Vagina (tissue), 2 donors: ENCODE measurements at regions of chr7 and their contacts with region 1.

Region 1: GRCh38 chr7:156397249-156397648 is 243.3 kb upstream of the RNF32 start:
- DNase-seq: no peak
- H3K4me3 ChIP-seq: no peak overlapping the region
- H3K27ac ChIP-seq: no peak overlapping the region
- H3K4me1 ChIP-seq: no peaks in the 10 kb centered on the region
- H3K27me3 ChIP-seq: no peaks in the 10 kb centered on the region
- CTCF ChIP-seq: no peak
- POLR2A ChIP-seq: no peak

Region 2: GRCh38 chr7:154871483-154871882 is 1525.8 kb before region 1 on chr7:
- intact Hi-C with region 1: no loop called
- DNase-seq: no peak
- H3K4me3 ChIP-seq: no peak overlapping the region
- H3K27ac ChIP-seq: no peak overlapping the region
- H3K4me1 ChIP-seq: no peaks in the 10 kb centered on the region
- H3K27me3 ChIP-seq: no peaks in the 10 kb centered on the region
- CTCF ChIP-seq: no peak
- POLR2A ChIP-seq: no peak

Region 3: GRCh38 chr7:157250605-157251228 is 853.5 kb after region 1 on chr7:
- intact Hi-C with region 1: loop called (anchors 5 kb)
- DNase-seq: peak in 1 of 2 donors; percentile 74
- H3K4me3 ChIP-seq: no peak overlapping the region
- H3K27ac ChIP-seq: no peak overlapping the region
- H3K4me1 ChIP-seq: no peaks in the 10 kb centered on the region
- H3K27me3 ChIP-seq: no peaks in the 10 kb centered on the region
- CTCF ChIP-seq: peak; percentile 15 to 64 (median 34)
- POLR2A ChIP-seq: no peak